ENCODE measurements at regions of chr2 and their contacts with region 1.

Region 1: GRCh38 chr2:96320728-96321622 is 4.1 kb upstream of the ITPRIPL1 start:
- H3K4me3 Mint-ChIP-seq: peak overlapping the region; percentile 89
- H3K27ac Mint-ChIP-seq: peak overlapping the region; percentile 95
- H3K4me1 Mint-ChIP-seq: peaks cover 60% of the 10 kb centered on the region
- H3K27me3 Mint-ChIP-seq: no peaks in the 10 kb centered on the region

Region 2: DNA sequence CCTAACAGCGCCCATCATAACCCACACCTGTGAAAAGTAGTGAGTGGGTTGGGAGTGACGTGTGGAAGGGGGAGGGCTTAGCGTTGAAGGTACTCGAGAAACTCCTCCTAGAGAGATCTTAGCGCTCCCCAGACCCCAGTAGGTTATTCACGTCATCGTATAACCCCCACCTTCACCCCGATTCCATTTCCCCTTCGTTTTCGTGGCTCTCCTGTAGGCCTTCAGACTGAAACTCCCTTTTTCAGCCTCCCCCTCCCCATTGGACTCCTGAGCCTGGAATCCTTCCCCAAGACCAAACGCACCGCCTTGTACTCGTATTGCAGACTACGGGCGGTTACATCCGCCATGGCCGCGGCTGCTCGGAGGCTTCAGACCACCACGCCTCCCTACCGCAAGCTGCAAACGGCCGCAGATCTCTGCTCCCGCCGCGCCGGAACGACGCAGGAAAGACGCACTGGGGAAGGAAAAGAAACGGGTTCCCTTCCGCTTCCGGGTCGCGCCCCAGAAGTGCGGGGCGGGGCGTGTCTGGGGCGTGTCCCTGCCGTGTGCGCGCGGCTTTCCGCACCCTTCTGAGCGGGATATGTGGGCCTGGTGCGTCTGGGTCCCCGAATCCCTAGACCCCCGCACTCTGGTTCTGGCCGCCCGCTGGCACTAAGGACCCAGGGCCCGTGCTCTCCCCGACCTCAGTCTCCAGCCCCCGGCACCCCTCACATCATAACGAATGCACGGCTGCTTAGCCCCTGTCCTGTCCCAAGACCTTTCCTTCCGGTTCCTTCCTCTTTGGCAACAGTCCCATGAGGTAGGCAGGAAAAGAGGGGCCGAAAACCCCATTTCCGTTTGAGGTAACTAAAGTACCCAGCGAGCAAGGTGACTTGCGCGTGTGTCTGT is 15.6 kb before region 1 on chr2 and contains the start of gene SNRNP200:
- intact Hi-C with region 1: loop called (anchors 2 kb)
- H3K4me3 Mint-ChIP-seq: peak within 1 kb of the TSS; percentile 94
- H3K27ac Mint-ChIP-seq: peak within 1 kb of the TSS; percentile 96
- H3K4me1 Mint-ChIP-seq: peaks cover 75% of the 10 kb centered on the region
- H3K27me3 Mint-ChIP-seq: no peaks in the 10 kb centered on the region

Region 3: DNA sequence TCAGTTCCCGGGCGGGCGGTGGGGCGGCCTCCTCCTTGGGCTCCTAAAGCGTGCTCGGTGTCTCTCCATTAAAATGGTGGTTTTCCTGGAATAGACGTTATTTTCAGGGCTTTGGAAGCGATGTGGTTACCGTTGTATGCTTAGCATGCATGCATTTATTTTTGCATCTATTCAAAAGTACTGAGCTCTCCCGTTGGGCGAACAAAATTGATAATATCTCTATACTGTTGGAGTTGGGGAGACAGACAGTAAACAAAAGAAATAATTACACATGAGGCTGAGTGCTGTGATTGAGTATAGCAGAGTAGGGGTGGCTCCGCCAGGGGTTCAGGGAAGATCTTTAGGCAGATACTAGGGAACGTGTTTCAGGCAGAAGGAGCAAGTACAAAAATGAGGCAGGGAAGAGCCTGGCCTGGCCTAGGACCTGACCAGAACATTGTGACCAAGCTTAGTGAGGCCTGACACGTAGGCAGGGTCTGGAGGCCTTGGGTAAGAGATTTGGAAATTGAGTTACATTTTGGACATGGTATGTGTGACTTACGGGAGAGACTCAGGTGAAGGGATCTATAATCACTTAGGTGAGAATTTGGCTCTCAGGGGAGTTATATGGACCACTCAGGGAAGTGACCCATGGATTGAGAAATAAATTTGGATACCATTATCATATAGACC is 15.3 kb after region 1 on chr2:
- intact Hi-C with region 1: loop called (anchors 2 kb)
- H3K4me3 Mint-ChIP-seq: peak overlapping the region; percentile 83
- H3K27ac Mint-ChIP-seq: peak overlapping the region; percentile 98
- H3K4me1 Mint-ChIP-seq: peaks cover 89% of the 10 kb centered on the region
- H3K27me3 Mint-ChIP-seq: no peaks in the 10 kb centered on the region

Region 4: GRCh38 chr2:96359310-96359709 is 38.3 kb after region 1 on chr2:
- intact Hi-C with region 1: loop called (anchors 5 kb)
- H3K4me3 Mint-ChIP-seq: no peak overlapping the region
- H3K27ac Mint-ChIP-seq: peak overlapping the region; percentile 66
- H3K4me1 Mint-ChIP-seq: peaks cover 36% of the 10 kb centered on the region
- H3K27me3 Mint-ChIP-seq: no peaks in the 10 kb centered on the region

Measured in dendritic cell treated with granulocyte-macrophage colony-stimulating factor and Interleukin-4, amounts not matched to agents 40 ng/mL and 50 ng/mL, for 4 days (primary cell).